ENCODE measurements at regions of chr3 and their contacts with region 1.

Region 1: DNA sequence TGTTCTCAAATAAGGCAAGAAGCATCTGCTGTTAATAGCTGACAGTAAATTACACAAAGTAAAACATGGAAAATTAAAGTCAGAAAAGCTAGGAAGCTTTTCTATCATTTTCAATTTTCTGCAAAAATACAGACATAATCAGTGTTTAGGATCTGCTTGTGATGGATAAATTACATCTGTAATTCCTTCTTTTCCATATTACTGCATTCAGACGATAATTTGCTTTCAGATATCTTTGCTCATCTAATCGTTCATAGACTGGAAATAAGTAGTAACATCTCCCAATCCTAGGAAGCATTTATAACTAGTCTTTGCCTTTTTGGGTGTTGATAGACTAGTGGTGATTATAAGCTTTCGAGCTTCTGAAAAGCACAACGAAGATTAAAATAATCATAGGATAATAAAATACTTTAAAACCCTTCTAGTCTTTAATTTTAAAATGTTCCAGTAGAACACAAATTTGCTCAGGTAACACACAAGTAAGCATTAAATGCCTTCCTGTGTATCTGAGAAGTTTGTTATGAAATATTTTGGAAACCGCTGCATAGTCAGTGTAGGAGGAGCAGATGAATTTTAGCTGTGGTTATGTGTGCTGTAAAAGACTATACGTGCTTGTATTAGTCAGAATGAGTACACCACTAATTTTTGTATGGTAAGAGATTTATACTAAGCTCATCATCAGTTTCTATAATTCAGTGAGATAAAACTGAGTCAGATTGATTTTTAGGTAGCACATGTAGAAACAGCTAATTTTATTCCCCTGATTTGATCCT is 41.0 kb downstream of the MBNL1 start:
- DNase-seq: peak in 3 of 9 donors; percentile 14 to 31 (median 27)
- ATAC-seq: peak; percentile 69
- H3K4me3 ChIP-seq: no peak overlapping the region
- H3K4me3 Mint-ChIP-seq: peak overlapping the region in 8 of 10 donors; percentile 9 to 57 (median 30)
- H3K27ac ChIP-seq: peak overlapping the region; percentile 56
- H3K27ac Mint-ChIP-seq: peak overlapping the region; percentile 15 to 88 (median 66)
- H3K4me1 ChIP-seq: peaks cover 50 to 68% of the 10 kb centered on the region in 2 donors
- H3K4me1 Mint-ChIP-seq: peaks cover 31 to 89% (median 83%) of the 10 kb centered on the region in 7 donors
- H3K27me3 ChIP-seq: no peaks in the 10 kb centered on the region
- H3K27me3 Mint-ChIP-seq: no peaks in the 10 kb centered on the region

Region 2: GRCh38 chr3:152322756-152323155 is 13.0 kb after region 1 on chr3:
- CTCF ChIA-PET with region 1: interaction called, 3 read pairs
- POLR2A ChIA-PET with region 1: interaction called, 7 read pairs
- intact Hi-C with region 1: loop called (anchors 1 kb)
- DNase-seq: no peak
- ATAC-seq: peak; percentile 43
- H3K4me3 ChIP-seq: no peak overlapping the region
- H3K4me3 Mint-ChIP-seq: peak overlapping the region in 9 of 10 donors; percentile 17 to 78 (median 57)
- H3K27ac ChIP-seq: peak overlapping the region; percentile 11
- H3K27ac Mint-ChIP-seq: peak overlapping the region in 8 of 9 donors; percentile 3 to 77 (median 56)
- H3K4me1 ChIP-seq: peaks cover 46 to 60% of the 10 kb centered on the region in 2 donors
- H3K4me1 Mint-ChIP-seq: peaks cover 59 to 96% (median 92%) of the 10 kb centered on the region in 7 donors
- H3K27me3 ChIP-seq: no peaks in the 10 kb centered on the region
- H3K27me3 Mint-ChIP-seq: no peaks in the 10 kb centered on the region

Measured in naive thymus-derived CD4-positive, alpha-beta T cell (primary cell).